ENCODE measurements at regions of chr1 and their contacts with region 1.

Region 1: DNA sequence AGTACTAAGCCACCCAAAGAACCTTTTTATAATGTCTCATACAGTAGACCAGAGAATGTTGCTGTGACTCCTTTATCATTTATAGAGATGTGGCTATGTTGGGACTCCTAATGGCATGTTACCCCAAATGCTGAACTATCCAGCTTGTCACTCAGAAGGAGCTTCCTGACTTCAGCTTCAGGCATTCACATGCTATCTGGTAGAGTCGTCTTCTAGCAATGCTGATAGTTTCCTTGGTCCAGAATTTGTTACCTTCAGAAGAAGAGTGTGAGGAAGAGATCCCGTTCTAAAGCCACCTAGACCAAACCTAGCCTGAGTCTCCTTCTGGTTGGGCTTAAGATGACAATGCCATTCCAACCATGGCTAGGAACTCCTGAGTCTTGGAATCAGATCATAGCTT is 68.1 kb downstream of the OLFML2B start:
- DNase-seq: no peak
- H3K4me3 ChIP-seq: no peak overlapping the region
- CTCF ChIP-seq: no peak
- POLR2A ChIP-seq: no peak

Region 2: DNA sequence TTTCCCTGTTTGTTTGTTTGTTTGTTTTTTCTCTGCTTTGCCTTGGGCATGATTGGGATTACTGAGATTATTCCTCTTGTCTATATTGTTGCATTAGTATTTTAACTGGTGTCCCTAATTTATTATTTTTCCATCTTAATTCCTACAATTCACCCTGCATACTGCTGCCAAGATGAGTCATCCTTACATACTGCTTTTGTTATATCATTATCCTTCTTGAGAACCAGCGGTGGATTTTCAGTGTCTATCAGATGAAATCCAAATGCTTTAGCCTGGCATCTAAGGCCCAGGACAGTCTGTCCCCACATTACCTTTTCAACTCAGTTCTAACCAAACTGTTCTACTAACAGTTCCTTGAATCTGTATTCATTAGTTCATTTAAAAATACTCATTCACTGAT is 33.6 kb before region 1 on chr1:
- intact Hi-C with region 1: loop called (anchors 1 kb)
- DNase-seq: no peak
- H3K4me3 ChIP-seq: no peak overlapping the region
- CTCF ChIP-seq: no peak
- POLR2A ChIP-seq: no peak

Measured in lower leg skin (tissue), 4 donors.